Colonic mucosa (tissue), 4 donors: ENCODE measurements at regions of chr16 and their contacts with region 1.

Region 1: GRCh38 chr16:30902029-30902972 is 5.9 kb downstream of the CTF1 start:
- DNase-seq: peak; percentile 67
- H3K4me3 ChIP-seq: peak overlapping the region; percentile 55
- H3K27ac ChIP-seq: peak overlapping the region; percentile 84
- H3K4me1 ChIP-seq: peaks cover under 1% of the 10 kb centered on the region
- H3K27me3 ChIP-seq: no peaks in the 10 kb centered on the region
- CTCF ChIP-seq: no peak

Region 2: DNA sequence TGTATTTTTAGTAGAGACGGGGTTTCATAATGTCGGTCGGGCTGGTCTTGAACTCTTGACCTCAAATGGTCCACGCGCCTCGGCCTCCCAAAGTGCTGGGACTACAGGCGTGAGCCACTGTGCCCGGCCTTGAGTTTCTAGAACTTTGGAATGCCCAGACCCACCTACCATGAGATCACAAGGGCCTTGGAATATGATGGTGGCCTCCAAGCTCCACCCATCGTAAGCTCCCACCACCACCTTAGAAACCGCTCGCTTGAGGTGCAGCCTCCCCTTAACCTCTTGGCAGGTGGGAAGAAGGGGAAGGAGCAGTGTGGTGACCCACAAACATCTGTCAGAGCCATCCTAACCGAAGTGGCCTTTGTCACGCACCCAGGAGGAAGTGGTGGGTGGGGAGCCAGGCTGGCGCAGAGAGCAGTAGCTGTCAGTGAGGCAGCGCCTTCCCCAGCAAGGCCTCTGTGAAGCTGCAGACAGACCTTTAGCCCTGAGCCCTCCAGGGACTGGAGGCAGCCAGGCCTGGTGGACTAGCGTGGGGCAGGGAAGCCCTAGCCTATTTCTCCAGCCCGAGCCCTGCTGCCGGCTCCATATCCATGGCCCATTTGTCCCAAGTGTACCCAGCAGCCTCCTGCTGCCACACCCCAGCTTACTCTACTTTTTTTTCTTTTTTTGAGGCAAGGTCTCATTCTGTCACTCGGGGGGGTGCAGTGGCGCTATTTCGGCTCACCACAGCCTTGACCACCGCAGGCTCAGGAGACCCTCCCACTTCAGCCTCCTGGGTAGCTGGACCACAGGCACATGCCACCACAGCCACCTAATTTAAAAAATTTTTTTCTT is 443.5 kb before region 1 on chr16:
- intact Hi-C with region 1: no loop called
- DNase-seq: peak; percentile 51
- H3K4me3 ChIP-seq: no peak overlapping the region
- H3K27ac ChIP-seq: peak overlapping the region; percentile 27
- H3K4me1 ChIP-seq: no peaks in the 10 kb centered on the region
- H3K27me3 ChIP-seq: no peaks in the 10 kb centered on the region
- CTCF ChIP-seq: no peak

Region 3: DNA sequence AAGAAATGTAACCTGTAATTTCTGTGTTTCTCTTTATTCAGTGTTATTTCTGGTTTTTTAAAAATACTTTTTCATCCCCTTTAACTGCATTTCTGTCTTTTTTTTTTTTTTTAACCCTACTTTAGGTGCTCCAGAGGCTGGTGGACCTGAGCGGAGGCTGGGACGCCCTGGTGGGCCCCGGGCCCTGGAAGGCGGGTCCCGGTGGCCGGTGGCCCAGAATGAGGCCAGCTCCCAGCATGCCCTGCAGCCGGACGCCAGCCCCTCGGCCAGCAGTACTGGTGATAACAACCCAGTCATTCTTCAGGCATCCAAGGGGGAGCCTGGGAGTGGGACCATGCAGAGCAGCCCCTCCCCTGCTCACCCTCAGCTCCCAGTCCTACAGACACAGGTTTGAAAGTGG is 201.8 kb before region 1 on chr16:
- intact Hi-C with region 1: loop called (anchors 10 kb)
- DNase-seq: no peak
- H3K4me3 ChIP-seq: no peak overlapping the region
- H3K27ac ChIP-seq: no peak overlapping the region
- H3K4me1 ChIP-seq: peaks cover 6% of the 10 kb centered on the region
- H3K27me3 ChIP-seq: no peaks in the 10 kb centered on the region
- CTCF ChIP-seq: no peak

Region 4: GRCh38 chr16:30844671-30845449 is 57.4 kb before region 1 on chr16:
- intact Hi-C with region 1: loop called (anchors 5 kb)
- DNase-seq: peak; percentile 91
- H3K4me3 ChIP-seq: no peak overlapping the region
- H3K27ac ChIP-seq: peak overlapping the region; percentile 15
- H3K4me1 ChIP-seq: peaks cover 12% of the 10 kb centered on the region
- H3K27me3 ChIP-seq: no peaks in the 10 kb centered on the region
- CTCF ChIP-seq: peak; percentile 75

Region 5: GRCh38 chr16:30997000-30997886 is 94.9 kb after region 1 on chr16:
- intact Hi-C with region 1: no loop called
- DNase-seq: peak; percentile 91
- H3K4me3 ChIP-seq: peak overlapping the region; percentile 36
- H3K27ac ChIP-seq: peak overlapping the region; percentile 55
- H3K4me1 ChIP-seq: no peaks in the 10 kb centered on the region
- H3K27me3 ChIP-seq: peaks cover 7% of the 10 kb centered on the region
- CTCF ChIP-seq: no peak